GM12878 (cell line): ENCODE measurements at regions of chr1 and their contacts with region 1.

Region 1: GRCh38 chr1:118931876-118932275 is 56.3 kb downstream of the TBX15 start:
- DNase-seq: no peak
- ATAC-seq: no peak
- H3K4me3 ChIP-seq: no peak overlapping the region
- H3K27ac ChIP-seq: no peak overlapping the region
- H3K4me1 ChIP-seq: no peaks in the 10 kb centered on the region
- H3K27me3 ChIP-seq: 0 out of 4 replicates have a peak, but pooled peaks cover 0 to 2% of the 10 kb centered on the region in 2 experiments
- CTCF ChIP-seq: no peak
- EP300 ChIP-seq: no peak
- POLR2A ChIP-seq: no peak
- RAD21 ChIP-seq: no peak

Region 2: GRCh38 chr1:118627435-118627834 is 304.4 kb before region 1 on chr1:
- CTCF ChIA-PET with region 1: no interaction called
- POLR2A ChIA-PET with region 1: no interaction called
- RAD21 ChIA-PET with region 1: no interaction called
- SMC1A ChIA-PET with region 1: no interaction called
- in situ Hi-C with region 1: no loop called
- intact Hi-C with region 1: loop called (anchors 10 kb)
- DNase-seq: no peak
- ATAC-seq: no peak
- H3K4me3 ChIP-seq: no peak overlapping the region
- H3K27ac ChIP-seq: no peak overlapping the region
- H3K4me1 ChIP-seq: no peaks in the 10 kb centered on the region
- H3K27me3 ChIP-seq: no peaks in the 10 kb centered on the region
- CTCF ChIP-seq: no peak
- EP300 ChIP-seq: no peak
- POLR2A ChIP-seq: no peak
- RAD21 ChIP-seq: no peak